ENCODE measurements at regions of chr1 and their contacts with region 1.

Region 1: DNA sequence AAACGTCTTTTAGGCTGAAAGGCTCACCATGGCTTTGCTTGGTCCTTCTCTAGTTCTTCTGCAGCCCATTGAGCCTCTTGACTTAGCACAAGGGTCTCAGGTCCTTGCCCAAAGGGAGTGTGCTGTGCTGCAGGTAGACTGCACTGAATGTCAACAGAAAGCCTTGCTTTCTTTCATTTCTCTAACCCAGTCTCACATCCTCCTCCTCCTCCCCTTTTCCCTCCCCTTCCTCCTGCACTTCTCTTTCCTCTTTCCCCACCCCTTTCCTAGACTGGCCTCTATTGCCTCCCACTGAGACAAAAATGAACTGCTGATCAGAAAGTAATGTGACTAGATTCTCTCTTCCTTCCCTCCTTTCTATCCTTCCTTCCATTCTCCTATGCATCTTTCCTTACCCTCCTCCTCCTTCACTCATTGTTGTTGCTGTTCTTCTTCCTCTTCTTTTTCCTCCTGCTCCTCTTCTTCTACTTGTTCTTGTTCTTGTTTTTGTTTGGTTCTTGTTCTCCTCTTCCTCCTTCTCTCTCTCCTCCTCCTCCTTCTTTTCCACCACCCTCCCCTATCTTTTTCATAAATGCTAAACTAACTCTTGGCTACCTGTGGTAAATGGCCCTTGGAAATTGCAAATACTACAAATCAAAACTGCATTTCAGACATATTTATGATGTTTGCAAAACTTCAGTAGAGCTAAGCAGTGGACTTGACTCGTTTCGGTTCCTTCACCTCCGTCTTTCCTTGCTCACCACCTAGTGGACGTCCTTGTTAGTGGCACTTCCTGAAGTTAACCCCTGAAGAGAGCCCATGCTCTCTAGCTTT is at the start of gene SELL:
- DNase-seq: peak; percentile 48 to 89 (median 78)
- ATAC-seq: peak; percentile 76
- H3K4me3 ChIP-seq: peak within 1 kb of the TSS; percentile 57 to 79
- H3K4me3 Mint-ChIP-seq: peak within 1 kb of the TSS; percentile 89
- H3K27ac ChIP-seq: peak within 1 kb of the TSS; percentile 50 to 53
- H3K27ac Mint-ChIP-seq: peak within 1 kb of the TSS; percentile 91
- H3K4me1 ChIP-seq: peaks cover 9% of the 10 kb centered on the region
- H3K4me1 Mint-ChIP-seq: peaks cover 21% of the 10 kb centered on the region
- H3K27me3 ChIP-seq: no peaks in the 10 kb centered on the region
- H3K27me3 Mint-ChIP-seq: no peaks in the 10 kb centered on the region
- CTCF ChIP-seq: peak; percentile 95
- total RNA-seq, gene SELL: 79.5 to 80.7 TPM

Region 2: GRCh38 chr1:168603501-168604110 is 1108.1 kb before region 1 on chr1:
- CTCF ChIA-PET with region 1: interaction called, 3 read pairs
- POLR2A ChIA-PET with region 1: no interaction called
- intact Hi-C with region 1: loop called in 1 of 2 experiments (anchors 5 kb)
- DNase-seq: peak; percentile 38 to 78 (median 68)
- ATAC-seq: peak; percentile 67
- H3K4me3 ChIP-seq: no peak overlapping the region
- H3K4me3 Mint-ChIP-seq: no peak overlapping the region
- H3K27ac ChIP-seq: no peak overlapping the region
- H3K27ac Mint-ChIP-seq: no peak overlapping the region
- H3K4me1 ChIP-seq: no peaks in the 10 kb centered on the region
- H3K4me1 Mint-ChIP-seq: no peaks in the 10 kb centered on the region
- H3K27me3 ChIP-seq: no peaks in the 10 kb centered on the region
- H3K27me3 Mint-ChIP-seq: no peaks in the 10 kb centered on the region
- CTCF ChIP-seq: peak; percentile 63

Region 3: GRCh38 chr1:169466259-169467230 is 245.1 kb before region 1 on chr1:
- CTCF ChIA-PET with region 1: interaction called, 4 read pairs
- POLR2A ChIA-PET with region 1: no interaction called
- intact Hi-C with region 1: loop called in 1 of 2 experiments (anchors 5 kb)
- DNase-seq: peak in 3 of 9 experiments; percentile 16 to 49 (median 39)
- ATAC-seq: no peak
- H3K4me3 ChIP-seq: no peak overlapping the region
- H3K4me3 Mint-ChIP-seq: no peak overlapping the region
- H3K27ac ChIP-seq: no peak overlapping the region
- H3K27ac Mint-ChIP-seq: no peak overlapping the region
- H3K4me1 ChIP-seq: no peaks in the 10 kb centered on the region
- H3K4me1 Mint-ChIP-seq: peaks cover 4% of the 10 kb centered on the region
- H3K27me3 ChIP-seq: no peaks in the 10 kb centered on the region
- H3K27me3 Mint-ChIP-seq: no peaks in the 10 kb centered on the region
- CTCF ChIP-seq: peak; percentile 41

Region 4: DNA sequence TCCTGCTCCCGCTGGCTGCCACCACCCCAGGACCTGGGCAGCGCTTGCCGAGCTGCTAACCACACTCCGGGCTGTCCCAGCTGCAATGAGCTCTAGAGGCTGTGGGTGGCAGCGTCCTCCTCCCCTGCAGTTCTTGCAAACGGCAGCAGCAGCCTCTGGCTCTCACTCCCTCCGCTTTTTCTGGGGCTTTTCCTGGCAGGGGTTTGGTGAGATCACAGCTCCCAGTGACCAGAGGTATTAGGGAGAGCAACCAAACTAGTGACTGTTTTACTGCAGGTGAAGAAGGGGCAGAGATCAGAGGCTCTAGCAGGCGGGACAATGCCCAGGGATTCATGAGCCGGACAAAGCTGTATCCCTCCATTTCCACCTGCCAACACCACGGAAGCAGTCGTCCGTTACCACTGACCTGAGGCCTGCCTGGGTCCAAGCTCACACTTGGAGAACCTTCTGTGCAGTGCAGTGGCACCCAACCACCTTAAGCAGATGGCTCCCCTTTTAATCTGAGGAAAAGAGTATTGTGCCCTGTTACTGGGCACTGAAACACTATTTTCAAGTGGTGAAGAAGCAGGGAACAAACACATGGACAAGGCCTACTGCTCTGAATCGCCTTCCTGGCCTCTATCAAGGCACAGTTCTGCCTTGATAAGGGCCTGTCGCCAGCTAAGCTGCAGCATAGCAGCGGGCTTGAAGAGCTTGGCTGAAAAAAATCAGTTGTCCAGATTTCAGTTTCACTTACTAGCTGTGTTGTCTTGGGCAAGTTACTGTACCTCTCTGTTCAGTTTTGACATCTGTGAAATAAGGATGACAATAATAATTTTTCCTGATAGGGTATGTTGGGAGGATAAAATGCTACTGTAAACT is 125.0 kb before region 1 on chr1 and contains the start of gene F5:
- CTCF ChIA-PET with region 1: interaction called, 48 read pairs
- POLR2A ChIA-PET with region 1: interaction called, 6 read pairs
- intact Hi-C with region 1: loop called (anchors 1 kb)
- DNase-seq: peak; percentile 53 to 83 (median 74)
- ATAC-seq: peak; percentile 100
- H3K4me3 ChIP-seq: peak within 1 kb of the TSS; percentile 1 to 32
- H3K4me3 Mint-ChIP-seq: peak within 1 kb of the TSS; percentile 76
- H3K27ac ChIP-seq: no peak within 1 kb of the TSS
- H3K27ac Mint-ChIP-seq: no peak within 1 kb of the TSS
- H3K4me1 ChIP-seq: peaks cover 21% of the 10 kb centered on the region
- H3K4me1 Mint-ChIP-seq: peaks cover 17% of the 10 kb centered on the region
- H3K27me3 ChIP-seq: no peaks in the 10 kb centered on the region
- H3K27me3 Mint-ChIP-seq: peaks cover 12% of the 10 kb centered on the region
- CTCF ChIP-seq: peak; percentile 70
- total RNA-seq, gene F5: 0.28 to 0.30 TPM

Region 5: DNA sequence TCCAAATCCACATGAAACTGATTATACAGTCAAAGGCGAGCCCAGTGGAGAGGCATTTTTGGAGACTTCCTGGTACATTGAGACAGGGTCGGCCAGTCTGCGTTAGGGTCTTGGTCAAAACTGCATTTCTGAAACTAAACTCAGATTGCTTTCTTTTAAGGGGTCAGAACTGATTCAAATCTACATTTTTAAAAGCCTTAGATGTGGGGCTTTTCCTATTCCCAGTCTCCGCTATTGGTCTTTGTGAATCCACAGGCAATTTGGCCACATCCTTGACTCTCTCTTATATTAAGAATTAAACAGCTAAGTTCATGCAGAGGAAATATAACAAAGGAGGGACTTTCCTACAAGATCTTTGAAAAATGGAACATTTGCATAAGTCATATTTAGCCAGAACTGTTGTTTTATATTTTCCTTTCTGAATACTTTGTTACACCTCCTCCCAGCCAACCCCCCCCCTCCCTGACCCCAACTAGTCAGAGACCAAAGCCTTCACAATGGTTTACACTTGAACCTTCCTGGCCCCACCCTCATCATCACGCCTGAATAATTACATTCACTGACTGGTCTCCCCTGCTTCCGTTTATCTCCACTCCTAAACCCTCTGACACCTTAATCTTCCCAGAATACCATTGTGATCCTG is 31.2 kb before region 1 on chr1:
- CTCF ChIA-PET with region 1: interaction called, 3 read pairs
- POLR2A ChIA-PET with region 1: interaction called, 3 read pairs
- intact Hi-C with region 1: loop called in 1 of 2 experiments (anchors 5 kb)
- DNase-seq: peak in 2 of 9 experiments; percentile 35 to 41
- ATAC-seq: peak; percentile 56
- H3K4me3 ChIP-seq: no peak overlapping the region
- H3K4me3 Mint-ChIP-seq: peak overlapping the region; percentile 45
- H3K27ac ChIP-seq: no peak overlapping the region
- H3K27ac Mint-ChIP-seq: peak overlapping the region; percentile 86
- H3K4me1 ChIP-seq: peaks cover 72% of the 10 kb centered on the region
- H3K4me1 Mint-ChIP-seq: peaks cover 54% of the 10 kb centered on the region
- H3K27me3 ChIP-seq: no peaks in the 10 kb centered on the region
- H3K27me3 Mint-ChIP-seq: no peaks in the 10 kb centered on the region
- CTCF ChIP-seq: no peak

Region 6: DNA sequence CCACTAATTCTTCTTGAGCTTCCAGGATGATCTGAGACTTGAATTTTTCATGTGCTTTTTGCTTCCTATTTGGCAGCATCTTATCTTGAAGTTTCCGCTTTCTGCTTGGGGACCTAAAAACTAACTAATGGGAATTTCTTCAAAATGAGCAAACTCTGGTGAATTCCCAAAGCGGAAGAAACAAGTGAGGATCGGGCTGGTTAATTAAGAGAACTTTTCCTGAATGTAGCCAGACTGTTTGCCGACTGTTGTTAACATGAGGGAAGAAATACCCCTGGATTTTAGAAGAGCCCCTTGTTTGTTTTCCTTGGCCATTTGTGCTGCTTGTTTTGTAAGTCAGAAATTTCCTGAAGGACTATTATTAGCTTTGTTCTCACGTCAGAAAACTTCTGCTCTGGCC is 28.3 kb after region 1 on chr1:
- CTCF ChIA-PET with region 1: no interaction called
- POLR2A ChIA-PET with region 1: no interaction called
- intact Hi-C with region 1: no loop called
- DNase-seq: no peak
- ATAC-seq: no peak
- H3K4me3 ChIP-seq: no peak overlapping the region
- H3K4me3 Mint-ChIP-seq: no peak overlapping the region
- H3K27ac ChIP-seq: no peak overlapping the region
- H3K27ac Mint-ChIP-seq: no peak overlapping the region
- H3K4me1 ChIP-seq: no peaks in the 10 kb centered on the region
- H3K4me1 Mint-ChIP-seq: no peaks in the 10 kb centered on the region
- H3K27me3 ChIP-seq: no peaks in the 10 kb centered on the region
- H3K27me3 Mint-ChIP-seq: peaks cover 12% of the 10 kb centered on the region
- CTCF ChIP-seq: no peak

Region 7: DNA sequence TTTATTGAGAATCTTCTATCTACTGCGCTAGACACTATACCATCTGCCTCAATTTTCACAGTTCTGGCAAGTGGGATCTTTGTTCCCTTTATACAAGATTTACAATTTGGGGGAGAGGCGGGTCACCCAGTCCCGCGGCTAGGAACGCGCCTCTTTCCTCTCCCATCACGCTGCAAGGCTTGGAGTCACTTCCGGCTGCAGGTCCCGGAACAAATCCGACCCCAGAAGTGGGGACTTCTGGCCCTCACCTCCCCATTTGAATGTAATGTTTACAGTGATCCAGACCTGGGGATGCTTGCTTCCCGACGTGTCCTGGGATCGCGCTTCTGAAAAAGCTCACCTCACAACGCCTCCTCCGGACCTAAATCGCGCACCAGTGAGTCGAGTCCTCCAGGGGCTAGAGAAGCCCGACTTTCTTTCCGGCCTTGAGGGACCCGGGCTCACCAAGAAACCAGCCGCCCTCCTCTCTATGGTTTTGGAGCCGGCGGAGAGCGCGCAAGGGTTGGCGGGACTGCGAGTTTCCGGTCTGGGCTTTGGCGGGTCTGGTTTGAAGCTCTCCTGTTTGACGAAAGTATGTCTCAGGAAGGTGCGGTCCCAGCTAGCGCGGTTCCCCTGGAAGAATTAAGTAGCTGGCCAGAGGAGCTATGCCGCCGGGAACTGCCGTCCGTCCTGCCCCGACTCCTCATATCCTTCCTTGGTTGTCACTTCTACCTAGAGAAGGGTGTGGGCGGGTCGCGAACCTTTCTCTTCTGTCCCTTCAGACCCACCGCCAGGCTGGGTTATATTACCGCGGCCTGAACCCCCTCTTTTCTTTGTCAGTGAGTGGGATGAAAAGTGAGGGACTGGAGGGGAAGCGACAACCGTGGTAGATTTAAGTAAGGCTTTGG is 83.1 kb after region 1 on chr1 and contains the start of gene METTL18:
- CTCF ChIA-PET with region 1: interaction called, 6 read pairs
- POLR2A ChIA-PET with region 1: interaction called, 5 read pairs
- intact Hi-C with region 1: loop called (anchors 1 to 5 kb)
- DNase-seq: peak; percentile 86 to 96 (median 91)
- ATAC-seq: peak; percentile 96
- H3K4me3 ChIP-seq: peak within 1 kb of the TSS; percentile 77 to 81
- H3K4me3 Mint-ChIP-seq: peak within 1 kb of the TSS; percentile 100
- H3K27ac ChIP-seq: peak within 1 kb of the TSS; percentile 78 to 95
- H3K27ac Mint-ChIP-seq: peak within 1 kb of the TSS; percentile 100
- H3K4me1 ChIP-seq: peaks cover 22% of the 10 kb centered on the region
- H3K4me1 Mint-ChIP-seq: peaks cover 48% of the 10 kb centered on the region
- H3K27me3 ChIP-seq: no peaks in the 10 kb centered on the region
- H3K27me3 Mint-ChIP-seq: no peaks in the 10 kb centered on the region
- CTCF ChIP-seq: peak; percentile 34
- total RNA-seq, gene METTL18: 2.2 to 3.7 TPM

Region 8: DNA sequence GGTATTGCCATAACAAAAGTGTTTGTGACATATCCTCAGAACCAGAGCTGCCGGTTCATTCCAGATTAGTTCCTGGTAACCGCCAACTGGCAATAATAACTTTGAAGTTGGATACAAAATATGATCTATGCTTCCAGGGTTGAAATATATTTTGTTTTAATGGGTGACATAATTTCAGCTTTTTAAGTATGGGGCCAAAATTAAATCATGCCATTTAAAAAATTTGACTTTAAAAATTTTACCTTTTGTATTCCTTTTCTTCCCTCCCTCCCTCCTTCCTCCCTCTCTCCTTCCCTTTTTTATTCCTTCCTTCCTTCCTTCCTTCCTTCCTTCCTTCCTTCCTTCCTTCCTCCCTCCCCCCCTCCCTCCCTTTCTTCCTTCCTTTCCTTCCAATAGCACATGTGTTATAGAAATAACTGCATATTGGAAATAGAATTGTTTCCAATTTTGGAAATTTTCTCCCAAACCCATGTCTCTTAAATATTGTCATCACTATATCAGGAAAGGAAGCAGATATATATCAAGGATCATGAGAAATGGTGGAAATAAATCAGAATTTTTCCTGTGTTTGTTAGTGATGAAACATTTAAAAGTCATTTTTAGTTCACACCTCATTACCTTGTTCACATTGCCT is 374.8 kb after region 1 on chr1:
- CTCF ChIA-PET with region 1: no interaction called
- POLR2A ChIA-PET with region 1: no interaction called
- intact Hi-C with region 1: no loop called
- DNase-seq: no peak
- ATAC-seq: no peak
- H3K4me3 ChIP-seq: no peak overlapping the region
- H3K4me3 Mint-ChIP-seq: no peak overlapping the region
- H3K27ac ChIP-seq: no peak overlapping the region
- H3K27ac Mint-ChIP-seq: no peak overlapping the region
- H3K4me1 ChIP-seq: no peaks in the 10 kb centered on the region
- H3K4me1 Mint-ChIP-seq: no peaks in the 10 kb centered on the region
- H3K27me3 ChIP-seq: no peaks in the 10 kb centered on the region
- H3K27me3 Mint-ChIP-seq: peaks cover 18% of the 10 kb centered on the region
- CTCF ChIP-seq: no peak